HepG2 (cell line): ENCODE measurements at regions of chr1 and their contacts with region 1.

Region 1: DNA sequence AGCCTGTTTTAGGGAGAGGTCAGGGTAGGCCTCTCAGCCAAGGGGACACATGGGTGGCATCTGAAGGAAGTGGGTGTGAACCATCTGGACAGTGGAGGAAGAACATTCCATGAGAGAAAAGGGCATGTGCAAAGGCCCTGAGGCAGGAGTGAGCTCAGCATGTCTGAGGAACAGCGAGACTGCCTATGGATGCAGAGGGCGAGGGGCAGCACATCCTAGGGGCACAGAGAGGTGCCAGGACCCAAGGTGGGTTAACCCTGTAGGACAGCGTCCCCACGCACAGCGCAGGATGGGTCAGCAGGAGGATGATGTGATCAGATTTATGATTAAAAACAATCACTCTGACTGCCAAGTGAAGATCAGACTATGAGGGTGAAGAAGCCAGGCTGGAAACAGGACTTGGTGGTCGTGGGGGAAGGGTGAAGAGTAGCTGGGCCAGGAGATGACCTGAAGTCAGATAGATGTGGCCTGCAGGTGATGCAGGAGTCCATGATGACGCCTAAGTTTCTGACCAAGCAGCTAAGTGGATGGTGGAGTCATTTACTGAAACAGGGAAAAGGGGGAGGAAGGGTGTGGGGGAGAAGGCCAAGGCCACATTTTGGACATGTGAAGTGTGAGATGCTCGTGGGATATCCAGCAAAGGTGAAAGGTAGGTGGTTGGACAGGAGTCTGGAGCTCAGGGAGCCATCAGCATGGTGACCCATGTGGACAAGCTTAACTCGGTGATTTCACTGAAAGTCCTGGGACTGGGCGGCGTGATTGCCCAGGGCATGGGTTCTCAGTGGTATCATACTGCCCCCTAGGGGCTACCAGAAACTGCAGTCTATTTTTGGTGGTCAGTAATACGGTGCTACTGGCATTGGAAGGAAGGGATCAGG is 37.8 kb downstream of the PABPC4 start:
- DNase-seq: peak; percentile 71
- ATAC-seq: peak; percentile 99
- H3K4me3 ChIP-seq: no peak overlapping the region
- H3K27ac ChIP-seq: no peak overlapping the region
- H3K4me1 ChIP-seq: no peaks in the 10 kb centered on the region
- H3K27me3 ChIP-seq: no peaks in the 10 kb centered on the region
- CTCF ChIP-seq: peak; percentile 93
- EP300 ChIP-seq: no peak
- POLR2A ChIP-seq: no peak
- RAD21 ChIP-seq: peak; percentile 83

Region 2: DNA sequence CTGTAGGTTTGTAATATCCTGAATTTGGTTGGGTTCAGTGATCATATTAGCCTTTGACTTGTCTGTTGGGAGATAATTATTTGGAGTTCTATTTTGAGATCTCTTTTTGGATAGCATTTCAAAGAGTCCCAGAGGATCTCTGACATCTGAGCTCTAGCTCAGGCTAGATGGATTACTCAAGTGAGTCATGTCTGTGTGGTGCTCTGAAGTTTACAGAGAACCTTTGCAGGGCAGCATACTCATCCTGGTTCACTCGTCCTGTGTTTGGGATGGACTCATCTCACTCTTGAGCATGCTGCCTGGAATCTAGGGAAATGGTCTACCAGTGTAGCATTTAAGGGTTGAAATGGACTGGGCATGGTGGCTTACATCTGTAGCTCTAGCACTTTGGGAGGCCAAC is 76.8 kb before region 1 on chr1:
- CTCF ChIA-PET with region 1: no interaction called
- POLR2A ChIA-PET with region 1: no interaction called
- in situ Hi-C with region 1: no loop called
- intact Hi-C with region 1: loop called (anchors 10 kb)
- DNase-seq: no peak
- ATAC-seq: no peak
- H3K4me3 ChIP-seq: no peak overlapping the region
- H3K27ac ChIP-seq: no peak overlapping the region
- H3K4me1 ChIP-seq: no peaks in the 10 kb centered on the region
- H3K27me3 ChIP-seq: no peaks in the 10 kb centered on the region
- CTCF ChIP-seq: no peak
- EP300 ChIP-seq: no peak
- POLR2A ChIP-seq: no peak
- RAD21 ChIP-seq: no peak

Region 3: DNA sequence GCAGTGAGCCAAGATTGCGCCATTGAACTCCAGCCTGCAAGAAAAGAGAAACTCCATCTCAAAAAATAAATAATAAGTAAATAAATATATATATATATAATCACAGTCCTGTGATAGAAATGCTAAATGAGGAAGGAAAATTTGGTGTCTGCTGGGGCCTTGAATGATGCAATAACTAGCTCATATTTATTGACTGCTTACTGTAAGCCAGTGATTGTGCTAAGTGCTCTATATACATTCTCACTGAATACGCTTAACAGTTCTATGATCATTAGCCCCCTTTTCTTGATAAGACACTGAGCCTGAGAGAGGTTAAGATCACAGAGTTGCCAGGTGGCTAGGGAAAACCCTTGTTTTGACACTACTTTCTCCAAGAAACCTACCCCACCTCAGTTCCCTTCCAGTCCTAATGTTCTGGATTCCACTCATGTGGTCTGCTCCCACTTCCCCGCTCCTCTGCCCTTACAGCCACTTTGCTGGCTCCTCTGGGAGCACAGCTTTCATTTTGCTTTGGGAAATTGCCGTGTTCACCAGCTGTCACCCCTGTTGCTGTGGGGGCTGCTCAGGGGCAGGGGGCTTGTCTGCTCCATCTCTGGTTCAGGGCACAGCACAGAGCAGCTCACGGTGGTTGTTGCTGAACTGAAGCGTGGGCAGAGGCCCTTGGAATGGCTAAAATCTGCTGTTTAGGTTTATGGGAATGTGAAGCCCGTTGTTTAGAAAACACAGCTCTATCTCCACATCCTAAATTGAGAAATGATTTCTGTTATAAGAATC is 49.8 kb before region 1 on chr1:
- CTCF ChIA-PET with region 1: no interaction called
- POLR2A ChIA-PET with region 1: no interaction called
- in situ Hi-C with region 1: loop called (anchors 5 kb)
- intact Hi-C with region 1: no loop called
- DNase-seq: no peak
- ATAC-seq: no peak
- H3K4me3 ChIP-seq: no peak overlapping the region
- H3K27ac ChIP-seq: no peak overlapping the region
- H3K4me1 ChIP-seq: peaks cover 12% of the 10 kb centered on the region; the same call in 1 of the 2 replicates
- H3K27me3 ChIP-seq: peaks cover 5 to 23% of the 10 kb centered on the region in 2 experiments; a peak in 4 of 5 replicates
- CTCF ChIP-seq: no peak
- EP300 ChIP-seq: no peak
- POLR2A ChIP-seq: no peak
- RAD21 ChIP-seq: no peak

Region 4: GRCh38 chr1:39588101-39588500 is 49.3 kb after region 1 on chr1:
- CTCF ChIA-PET with region 1: no interaction called
- POLR2A ChIA-PET with region 1: no interaction called
- in situ Hi-C with region 1: no loop called
- intact Hi-C with region 1: no loop called
- DNase-seq: no peak
- ATAC-seq: no peak
- H3K4me3 ChIP-seq: no peak overlapping the region
- H3K27ac ChIP-seq: no peak overlapping the region
- H3K4me1 ChIP-seq: peaks cover 5% of the 10 kb centered on the region; the same call in 1 of the 2 replicates
- H3K27me3 ChIP-seq: peaks cover 0 to 11% of the 10 kb centered on the region in 2 experiments; a peak in 4 of 5 replicates
- CTCF ChIP-seq: no peak
- EP300 ChIP-seq: no peak
- POLR2A ChIP-seq: no peak
- RAD21 ChIP-seq: no peak

Region 5: DNA sequence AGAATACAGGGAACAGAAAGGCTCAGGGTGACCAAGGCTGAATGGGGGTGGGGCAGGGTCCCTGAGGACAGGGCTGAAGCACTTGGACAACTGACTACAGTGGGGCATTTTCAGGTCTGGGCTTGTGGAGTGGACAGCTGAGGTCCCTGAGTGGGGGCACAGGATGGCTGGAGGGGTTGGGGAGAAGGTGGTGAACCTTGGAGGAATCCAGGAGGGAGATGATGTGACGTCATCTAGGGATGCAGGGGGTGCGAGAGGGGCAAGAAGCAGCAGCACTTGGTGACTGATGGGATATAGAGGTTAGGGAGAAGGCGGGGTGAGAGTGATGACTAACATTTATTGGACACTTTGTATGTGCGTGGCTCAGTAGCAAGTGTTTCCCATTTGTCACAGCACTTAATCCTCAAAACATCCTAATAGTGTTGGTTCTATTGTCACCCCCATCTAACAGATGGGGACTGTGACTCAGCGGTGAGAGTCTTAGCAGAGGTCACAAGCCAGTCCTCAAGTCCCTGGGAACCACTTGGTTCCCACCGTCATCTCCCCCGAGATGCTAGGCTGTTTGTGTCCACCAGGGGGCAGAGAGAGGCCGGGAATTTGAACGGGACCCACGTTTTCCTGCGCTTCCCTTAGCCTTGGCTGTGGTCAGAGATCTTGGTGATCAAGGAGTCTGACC is 277.7 kb after region 1 on chr1:
- CTCF ChIA-PET with region 1: no interaction called
- POLR2A ChIA-PET with region 1: no interaction called
- in situ Hi-C with region 1: no loop called
- intact Hi-C with region 1: no loop called
- DNase-seq: peak; percentile 49
- ATAC-seq: peak; percentile 82
- H3K4me3 ChIP-seq: no peak overlapping the region
- H3K27ac ChIP-seq: no peak overlapping the region
- H3K4me1 ChIP-seq: peaks cover 10% of the 10 kb centered on the region; the same call in 1 of the 2 replicates
- H3K27me3 ChIP-seq: peaks cover 1 to 13% of the 10 kb centered on the region in 2 experiments; a peak in 2 of 5 replicates
- CTCF ChIP-seq: peak; percentile 92
- EP300 ChIP-seq: no peak
- POLR2A ChIP-seq: no peak
- RAD21 ChIP-seq: peak; percentile 91